AG04450 (cell line): ENCODE measurements at regions of chr12 and their contacts with region 1.

Region 1: DNA sequence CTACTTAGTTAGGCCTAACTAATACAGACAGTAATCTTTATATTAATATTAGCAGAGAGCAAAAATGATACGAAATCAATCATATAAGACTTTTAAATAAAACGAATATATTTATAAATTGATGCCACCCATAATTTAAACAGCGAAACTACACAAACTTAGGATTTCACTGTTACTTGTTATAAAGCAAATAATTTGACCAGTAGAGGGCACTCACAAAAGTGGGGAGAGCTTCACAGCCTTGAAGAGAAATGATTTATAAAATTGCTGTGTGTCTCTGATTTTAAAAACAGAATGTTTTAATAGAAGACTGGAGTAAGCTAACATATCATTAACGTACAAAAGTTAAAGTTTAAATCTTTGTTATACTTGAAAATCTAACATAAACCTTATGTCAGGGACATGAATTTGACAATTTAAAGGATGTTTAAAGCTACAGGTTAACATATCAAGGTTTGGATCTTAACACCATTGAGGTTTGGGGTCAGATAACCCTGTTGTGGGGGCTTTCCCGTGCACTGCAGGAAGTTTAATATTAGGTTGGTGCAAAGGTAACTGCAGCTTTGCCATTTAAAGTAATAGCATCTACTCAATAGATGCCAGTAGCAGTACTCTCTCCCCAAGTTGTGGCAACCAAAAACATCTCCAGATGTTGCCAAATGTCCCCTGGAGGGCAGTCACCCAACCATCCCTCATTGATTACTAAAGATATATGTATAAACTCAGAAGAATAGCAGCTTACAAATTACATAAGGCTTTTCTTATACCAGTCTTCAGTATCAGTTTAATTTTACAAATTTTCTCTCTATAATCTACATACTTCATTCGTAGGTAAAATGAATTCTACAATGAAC is 9.3 kb downstream of the KRAS start:
- DNase-seq: no peak
- H3K4me3 ChIP-seq: no peak overlapping the region
- H3K27ac ChIP-seq: no peak overlapping the region
- H3K27me3 ChIP-seq: no peaks in the 10 kb centered on the region
- CTCF ChIP-seq: peak; percentile 68

Region 2: DNA sequence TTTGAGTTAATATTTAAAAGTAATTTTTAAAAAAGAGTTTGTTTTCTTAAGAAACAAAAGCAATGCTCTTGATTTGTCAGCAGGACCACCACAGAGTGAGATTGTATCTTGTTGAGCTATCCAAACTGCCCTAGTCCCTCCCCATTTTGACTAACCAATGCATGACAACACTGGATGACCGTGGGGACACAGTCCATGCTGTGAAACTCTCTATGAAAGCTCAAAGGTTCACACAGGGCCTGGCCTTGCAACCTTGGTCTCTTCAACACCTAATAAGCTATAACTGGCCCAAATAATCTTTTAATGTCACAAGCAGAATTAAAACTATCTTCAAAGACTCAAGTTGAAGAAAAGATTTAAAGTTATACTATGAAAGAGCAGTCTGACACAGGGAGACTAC is 32.8 kb before region 1 on chr12:
- CTCF ChIA-PET with region 1: interaction called, 10 read pairs
- POLR2A ChIA-PET with region 1: no interaction called
- DNase-seq: no peak
- H3K4me3 ChIP-seq: no peak overlapping the region
- H3K27ac ChIP-seq: no peak overlapping the region
- H3K27me3 ChIP-seq: no peaks in the 10 kb centered on the region
- CTCF ChIP-seq: no peak

Region 3: GRCh38 chr12:25332143-25332542 is 90.7 kb after region 1 on chr12:
- CTCF ChIA-PET with region 1: interaction called, 13 read pairs
- POLR2A ChIA-PET with region 1: no interaction called
- DNase-seq: no peak
- H3K4me3 ChIP-seq: no peak overlapping the region
- H3K27ac ChIP-seq: no peak overlapping the region
- H3K27me3 ChIP-seq: no peaks in the 10 kb centered on the region
- CTCF ChIP-seq: no peak

Region 4: GRCh38 chr12:25364529-25365339 is 123.3 kb after region 1 on chr12:
- CTCF ChIA-PET with region 1: interaction called, 10 read pairs
- POLR2A ChIA-PET with region 1: no interaction called
- DNase-seq: no peak
- H3K4me3 ChIP-seq: no peak overlapping the region
- H3K27ac ChIP-seq: no peak overlapping the region
- H3K27me3 ChIP-seq: no peaks in the 10 kb centered on the region
- CTCF ChIP-seq: no peak

Region 5: GRCh38 chr12:25377469-25378177 is 136.2 kb after region 1 on chr12:
- CTCF ChIA-PET with region 1: interaction called, 11 read pairs
- POLR2A ChIA-PET with region 1: no interaction called
- DNase-seq: peak; percentile 63
- H3K4me3 ChIP-seq: no peak overlapping the region
- H3K27ac ChIP-seq: peak overlapping the region; percentile 21
- H3K27me3 ChIP-seq: no peaks in the 10 kb centered on the region
- CTCF ChIP-seq: peak; percentile 24; the same call in 1 of the 2 replicates

Region 6: DNA sequence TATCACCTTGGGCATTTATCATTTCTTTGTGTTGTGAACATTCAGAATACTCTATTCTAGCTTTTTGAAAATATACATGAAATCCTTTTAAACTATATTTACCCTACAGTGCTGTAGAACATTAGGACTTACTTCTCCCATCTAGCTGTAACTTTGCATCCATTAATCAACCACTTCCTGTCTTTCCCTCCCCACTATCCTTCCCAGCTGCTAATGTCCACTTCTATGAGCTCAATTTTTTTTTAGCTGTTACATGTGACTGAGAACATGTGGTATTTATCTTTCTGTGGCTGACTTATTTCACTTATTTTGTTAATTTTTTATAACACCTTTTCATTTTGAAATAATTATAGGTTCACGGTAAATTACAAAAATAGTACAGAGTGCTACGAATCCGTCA is 175.7 kb after region 1 on chr12:
- CTCF ChIA-PET with region 1: no interaction called
- POLR2A ChIA-PET with region 1: no interaction called
- DNase-seq: no peak
- H3K4me3 ChIP-seq: no peak overlapping the region
- H3K27ac ChIP-seq: no peak overlapping the region
- H3K27me3 ChIP-seq: no peaks in the 10 kb centered on the region
- CTCF ChIP-seq: no peak

Region 7: DNA sequence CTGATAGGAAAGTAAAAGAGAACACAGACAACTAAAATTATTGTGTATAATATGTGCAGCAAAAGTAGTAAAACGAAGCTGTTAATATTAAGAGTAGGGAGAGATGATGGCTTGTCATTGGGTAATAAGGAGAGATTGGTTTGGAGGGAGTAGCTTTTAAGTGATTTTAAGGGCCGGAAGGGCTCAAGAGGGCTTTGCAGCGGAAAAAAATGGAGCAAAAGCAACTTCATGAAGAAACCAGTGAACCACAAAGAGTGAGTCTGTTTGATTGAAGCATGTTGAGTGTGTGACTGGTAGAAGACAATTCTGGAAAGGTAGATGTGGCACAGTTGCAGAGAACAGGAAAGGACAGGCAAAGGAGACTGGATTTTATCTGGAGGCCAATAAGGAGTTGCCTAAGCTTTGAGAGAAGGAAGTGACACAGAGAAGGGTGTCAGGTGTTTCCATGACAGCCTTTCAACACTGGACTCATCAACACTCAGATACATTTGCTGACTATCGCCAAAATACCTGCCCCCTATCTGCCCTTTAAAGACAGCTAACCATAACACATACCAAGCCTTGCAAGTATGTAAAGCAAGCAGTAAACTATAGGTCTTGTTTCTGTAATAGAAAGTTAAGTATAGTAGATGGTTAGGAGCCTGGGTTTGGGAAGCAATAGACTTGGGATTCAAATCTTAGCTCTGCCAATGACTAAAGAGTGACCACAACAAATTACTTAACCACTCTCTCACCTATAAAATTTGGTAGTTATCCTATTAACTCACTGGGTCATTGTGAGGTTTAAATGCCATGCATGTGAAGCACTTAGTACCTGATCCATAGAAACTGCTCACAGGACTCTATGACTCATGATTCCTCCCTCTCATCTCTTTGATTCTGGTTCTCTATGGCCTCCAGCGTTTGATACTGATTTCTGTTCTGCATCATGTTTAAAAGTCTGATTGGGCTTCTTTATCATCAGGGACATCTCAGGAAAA is 429.0 kb after region 1 on chr12:
- CTCF ChIA-PET with region 1: no interaction called
- POLR2A ChIA-PET with region 1: no interaction called
- DNase-seq: no peak
- H3K4me3 ChIP-seq: no peak overlapping the region
- H3K27ac ChIP-seq: no peak overlapping the region
- H3K27me3 ChIP-seq: no peaks in the 10 kb centered on the region
- CTCF ChIP-seq: no peak